ENCODE measurements at regions of chr9 and their contacts with region 1.

Region 1: GRCh38 chr9:12719431-12719830 is 26.2 kb downstream of the TYRP1 start:
- DNase-seq: no peak
- ATAC-seq: no peak
- H3K4me3 ChIP-seq: no peak overlapping the region
- H3K4me3 Mint-ChIP-seq: no peak overlapping the region
- H3K27ac ChIP-seq: no peak overlapping the region
- H3K27ac Mint-ChIP-seq: no peak overlapping the region
- H3K4me1 ChIP-seq: no peaks in the 10 kb centered on the region
- H3K4me1 Mint-ChIP-seq: no peaks in the 10 kb centered on the region
- H3K27me3 ChIP-seq: no peaks in the 10 kb centered on the region
- H3K27me3 Mint-ChIP-seq: no peaks in the 10 kb centered on the region
- CTCF ChIP-seq: no peak

Region 2: DNA sequence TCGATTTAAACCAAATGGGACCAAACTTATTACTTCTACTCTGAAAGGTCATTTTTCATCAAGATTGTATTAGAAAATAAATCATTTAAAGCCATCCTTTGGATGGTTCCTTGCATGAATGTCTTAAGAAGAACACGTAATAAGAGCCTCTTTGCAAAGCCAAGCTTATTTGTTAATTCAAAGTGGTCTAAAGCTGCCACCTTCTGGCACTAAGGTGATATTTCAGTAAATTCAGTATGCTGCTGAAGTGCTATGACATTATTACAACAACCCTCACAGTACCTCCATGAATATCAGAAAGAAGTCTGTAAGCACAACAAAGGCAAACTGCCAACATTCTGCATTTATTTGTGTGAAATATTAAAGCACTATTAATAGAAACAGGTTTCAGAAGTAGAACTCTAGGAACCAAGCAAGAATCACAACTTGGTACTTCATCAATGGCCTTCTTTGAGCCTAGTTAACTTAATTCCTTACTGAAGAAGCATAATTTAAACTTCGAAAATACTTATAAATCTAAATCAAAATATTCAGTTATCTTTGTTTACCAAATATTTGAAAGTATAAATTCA is 79.3 kb before region 1 on chr9:
- CTCF ChIA-PET with region 1: no interaction called
- POLR2A ChIA-PET with region 1: no interaction called
- intact Hi-C with region 1: loop called in 1 of 2 experiments (anchors 10 kb)
- DNase-seq: no peak
- ATAC-seq: no peak
- H3K4me3 ChIP-seq: no peak overlapping the region
- H3K4me3 Mint-ChIP-seq: no peak overlapping the region
- H3K27ac ChIP-seq: no peak overlapping the region
- H3K27ac Mint-ChIP-seq: no peak overlapping the region
- H3K4me1 ChIP-seq: no peaks in the 10 kb centered on the region
- H3K4me1 Mint-ChIP-seq: no peaks in the 10 kb centered on the region
- H3K27me3 ChIP-seq: no peaks in the 10 kb centered on the region
- H3K27me3 Mint-ChIP-seq: no peaks in the 10 kb centered on the region
- CTCF ChIP-seq: no peak